ENCODE measurements at regions of chr16 and their contacts with region 1.

Region 1: GRCh38 chr16:27235055-27235937 is 32.0 kb downstream of the KDM8 start:
- DNase-seq: peak; percentile 90
- ATAC-seq: peak; percentile 75

Region 2: GRCh38 chr16:27199736-27200135 is 35.6 kb before region 1 on chr16:
- intact Hi-C with region 1: no loop called
- DNase-seq: no peak
- ATAC-seq: no peak

Region 3: DNA sequence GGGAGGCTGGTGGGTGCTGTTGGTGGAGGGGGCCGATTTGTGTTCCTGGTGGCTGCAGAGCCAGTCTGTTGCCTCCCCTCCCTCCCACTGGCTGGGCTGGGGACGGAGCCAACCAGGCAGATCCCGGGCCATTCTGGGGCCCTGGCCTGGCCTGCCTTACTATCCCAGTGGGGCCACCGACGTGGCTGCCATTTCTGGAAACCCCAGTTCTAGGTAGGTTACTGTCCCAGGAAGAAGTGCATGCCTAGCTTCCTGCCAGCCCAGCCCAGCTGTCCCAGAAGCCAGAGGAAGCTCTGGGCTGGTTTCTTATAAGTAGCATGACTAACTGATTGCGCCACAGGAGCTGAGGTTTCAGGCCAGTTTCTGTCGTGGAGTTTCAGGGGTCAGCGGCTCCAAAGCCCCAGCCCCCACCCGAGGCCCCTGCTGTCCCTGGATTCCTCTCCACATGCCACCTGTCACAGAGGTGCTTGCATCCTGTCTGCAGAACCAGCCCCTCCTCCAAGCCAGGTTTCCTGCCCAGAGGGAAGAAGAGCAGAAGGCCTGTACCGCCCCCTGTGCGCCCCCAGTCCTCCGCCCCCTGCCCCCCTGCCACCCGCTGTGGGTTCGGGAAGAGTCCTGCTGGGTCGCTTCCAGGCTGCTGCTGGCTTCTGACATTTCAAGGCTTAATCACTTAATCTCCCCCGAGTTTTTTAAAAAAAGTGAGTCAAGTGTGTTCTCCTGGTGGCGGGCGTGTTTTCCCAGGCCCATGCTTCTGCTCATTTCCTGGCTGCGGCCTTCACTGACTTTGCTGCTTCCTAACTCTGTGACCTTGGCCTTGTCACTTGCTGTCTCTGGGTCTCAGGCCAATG is 91.7 kb after region 1 on chr16:
- intact Hi-C with region 1: loop called (anchors 5 kb)
- DNase-seq: peak; percentile 90
- ATAC-seq: peak; percentile 85